Stomach (tissue), 19 donors: ENCODE measurements at regions of chr6 and their contacts with region 1.

Region 1: DNA sequence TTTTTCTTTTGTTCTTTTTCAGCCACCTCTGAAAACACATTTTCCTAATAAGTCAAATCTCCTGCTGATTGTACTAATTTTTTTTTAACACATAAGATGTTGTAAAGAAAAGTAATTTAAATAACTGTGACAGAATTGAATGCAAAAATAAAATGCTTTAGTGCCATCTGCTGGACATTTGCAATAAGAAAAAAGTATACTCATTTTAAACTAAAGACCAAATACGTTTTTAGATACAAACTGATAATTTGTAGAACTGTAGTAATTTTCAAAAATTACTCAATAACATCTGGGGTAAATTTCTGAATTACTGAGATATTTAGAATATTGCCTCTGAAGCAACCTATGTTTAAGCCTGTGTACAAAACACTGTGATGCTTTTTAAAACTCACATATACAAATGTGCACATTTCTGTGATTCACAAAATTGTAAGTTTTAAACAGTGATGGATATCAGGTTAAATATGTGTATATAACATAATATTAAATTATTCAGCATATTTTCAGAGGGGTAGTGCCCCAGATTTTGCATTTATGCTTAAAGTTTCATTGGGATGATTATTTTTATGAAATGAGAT is 198.7 kb downstream of the RIMS1 start:
- DNase-seq: peak in 1 of 2 donors; percentile 54
- H3K4me3 ChIP-seq: no peak overlapping the region
- H3K27ac ChIP-seq: no peak overlapping the region
- H3K4me1 ChIP-seq: no peaks in the 10 kb centered on the region
- H3K27me3 ChIP-seq: no peaks in the 10 kb centered on the region
- CTCF ChIP-seq: peak in 3 of 7 experiments; percentile 5 to 46 (median 28)
- EP300 ChIP-seq: no peak
- POLR2A ChIP-seq: no peak

Region 2: DNA sequence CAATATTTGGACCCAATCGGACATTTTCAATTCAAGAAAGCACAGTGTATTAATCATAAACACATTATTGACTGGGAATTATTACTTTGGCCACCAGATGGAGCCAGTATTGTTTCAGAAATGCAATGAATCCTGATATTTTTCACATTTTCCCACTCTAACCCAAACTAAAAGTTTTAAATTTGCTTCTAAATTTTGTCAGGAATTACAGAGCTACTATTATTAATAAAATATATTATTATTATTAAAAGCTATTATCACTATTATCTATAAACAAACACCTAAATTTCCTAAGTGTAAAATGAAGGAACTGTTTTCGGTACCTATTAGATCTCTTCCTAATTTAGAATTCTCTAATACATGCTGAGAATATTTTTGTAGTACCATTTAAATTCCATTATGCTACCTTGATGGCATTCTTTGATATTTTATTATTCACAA is 551.1 kb before region 1 on chr6:
- intact Hi-C with region 1: loop called (anchors 10 kb)
- DNase-seq: peak in 1 of 2 donors; percentile 49
- H3K4me3 ChIP-seq: no peak overlapping the region
- H3K27ac ChIP-seq: no peak overlapping the region
- H3K4me1 ChIP-seq: no peaks in the 10 kb centered on the region
- H3K27me3 ChIP-seq: no peaks in the 10 kb centered on the region
- CTCF ChIP-seq: peak in 5 of 7 experiments; percentile 27 to 60 (median 37)
- EP300 ChIP-seq: no peak
- POLR2A ChIP-seq: no peak

Region 3: GRCh38 chr6:71977884-71978283 is 107.2 kb before region 1 on chr6:
- intact Hi-C with region 1: no loop called
- DNase-seq: peak in 1 of 2 donors; percentile 20
- H3K4me3 ChIP-seq: no peak overlapping the region
- H3K27ac ChIP-seq: no peak overlapping the region
- H3K4me1 ChIP-seq: no peaks in the 10 kb centered on the region
- H3K27me3 ChIP-seq: no peaks in the 10 kb centered on the region
- CTCF ChIP-seq: no peak
- EP300 ChIP-seq: no peak
- POLR2A ChIP-seq: no peak

Region 4: DNA sequence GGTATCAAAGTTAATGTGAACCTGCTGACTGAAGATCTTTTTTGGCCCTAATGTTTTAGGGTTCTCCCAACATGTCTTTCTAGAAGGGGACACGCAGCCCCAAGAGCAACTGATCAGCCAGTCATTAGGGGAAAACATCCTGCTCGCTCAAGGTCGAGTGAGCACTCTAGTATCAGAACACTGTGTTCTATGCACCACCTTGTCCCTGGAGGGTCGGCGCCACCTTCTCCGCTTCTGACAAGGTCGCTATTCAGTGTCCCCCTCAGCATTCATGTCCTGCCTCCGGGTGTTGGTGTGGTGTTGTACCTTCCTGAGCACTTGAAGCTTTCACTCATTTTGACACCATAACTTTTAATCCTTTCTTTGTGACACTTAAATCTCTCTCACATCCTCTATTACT is 205.5 kb after region 1 on chr6:
- intact Hi-C with region 1: no loop called
- DNase-seq: no peak
- H3K4me3 ChIP-seq: no peak overlapping the region
- H3K27ac ChIP-seq: no peak overlapping the region
- H3K4me1 ChIP-seq: no peaks in the 10 kb centered on the region
- H3K27me3 ChIP-seq: no peaks in the 10 kb centered on the region
- CTCF ChIP-seq: no peak
- EP300 ChIP-seq: no peak
- POLR2A ChIP-seq: no peak